Cardiac septum (tissue), 1 donor: ENCODE measurements at regions of chr6 and their contacts with region 1.

Region 1: DNA sequence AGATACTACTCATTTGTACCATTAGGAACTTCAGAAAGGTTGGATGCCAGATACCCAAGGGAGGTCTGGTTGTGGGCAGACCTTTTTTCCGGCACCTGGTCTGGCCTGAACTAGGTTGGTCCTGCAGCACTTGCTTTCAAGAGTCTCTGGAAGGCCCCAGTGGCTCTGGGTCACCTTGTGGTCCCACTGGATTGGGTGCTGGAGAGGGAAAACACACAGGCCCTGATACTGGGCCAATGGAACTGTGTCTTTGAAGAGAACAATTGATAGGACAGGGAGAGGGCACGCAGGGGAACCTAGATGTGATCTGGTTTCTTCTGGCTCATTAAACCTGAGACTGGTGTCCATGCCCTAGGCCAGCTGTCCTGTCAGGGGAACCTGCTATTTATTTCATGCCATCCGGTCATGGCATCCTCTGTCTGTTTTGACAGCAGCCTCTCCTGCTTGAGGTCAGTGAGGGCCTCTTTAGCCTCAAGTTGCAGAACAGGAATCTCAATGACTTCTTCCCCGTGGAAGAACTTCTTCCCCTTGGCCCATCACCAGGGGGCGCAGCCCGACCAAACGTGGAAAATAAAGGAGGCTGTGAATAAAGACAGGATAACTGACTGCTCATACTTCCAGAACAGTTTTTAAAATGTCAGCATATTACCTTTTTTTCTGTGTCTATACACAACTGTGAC is 25.0 kb downstream of the TAF8 start:
- DNase-seq: no peak

Region 2: DNA sequence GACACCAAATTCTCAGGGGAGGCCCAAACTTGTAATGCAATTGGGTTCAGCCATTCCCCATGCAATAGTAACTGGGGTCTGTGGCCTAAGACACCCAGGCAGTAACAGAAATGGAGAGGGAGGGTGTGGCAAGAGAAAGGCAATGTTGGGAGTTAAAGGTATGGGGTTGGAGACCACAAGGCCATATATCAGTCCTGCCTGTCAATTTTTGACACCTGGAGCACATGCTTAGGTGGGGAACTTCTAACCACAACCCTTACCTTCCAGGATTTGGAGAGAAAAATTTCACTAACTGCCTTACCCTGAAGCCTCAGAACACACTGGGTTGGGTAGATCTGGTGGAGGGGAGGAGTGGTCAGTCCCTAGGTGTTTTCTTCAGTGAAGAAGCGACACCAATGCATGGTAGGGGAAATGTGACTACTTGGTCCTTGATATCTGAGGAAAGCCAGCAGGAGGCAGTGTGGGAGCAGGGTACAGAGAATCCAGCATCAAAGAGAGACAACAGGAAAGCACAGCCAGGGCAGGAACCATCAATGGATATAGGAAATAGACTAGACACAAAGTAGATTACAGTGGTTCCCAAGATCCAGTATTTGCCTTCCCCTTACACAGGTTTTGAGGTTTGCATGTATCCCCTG is 173.3 kb before region 1 on chr6:
- intact Hi-C with region 1: no loop called
- DNase-seq: no peak

Region 3: DNA sequence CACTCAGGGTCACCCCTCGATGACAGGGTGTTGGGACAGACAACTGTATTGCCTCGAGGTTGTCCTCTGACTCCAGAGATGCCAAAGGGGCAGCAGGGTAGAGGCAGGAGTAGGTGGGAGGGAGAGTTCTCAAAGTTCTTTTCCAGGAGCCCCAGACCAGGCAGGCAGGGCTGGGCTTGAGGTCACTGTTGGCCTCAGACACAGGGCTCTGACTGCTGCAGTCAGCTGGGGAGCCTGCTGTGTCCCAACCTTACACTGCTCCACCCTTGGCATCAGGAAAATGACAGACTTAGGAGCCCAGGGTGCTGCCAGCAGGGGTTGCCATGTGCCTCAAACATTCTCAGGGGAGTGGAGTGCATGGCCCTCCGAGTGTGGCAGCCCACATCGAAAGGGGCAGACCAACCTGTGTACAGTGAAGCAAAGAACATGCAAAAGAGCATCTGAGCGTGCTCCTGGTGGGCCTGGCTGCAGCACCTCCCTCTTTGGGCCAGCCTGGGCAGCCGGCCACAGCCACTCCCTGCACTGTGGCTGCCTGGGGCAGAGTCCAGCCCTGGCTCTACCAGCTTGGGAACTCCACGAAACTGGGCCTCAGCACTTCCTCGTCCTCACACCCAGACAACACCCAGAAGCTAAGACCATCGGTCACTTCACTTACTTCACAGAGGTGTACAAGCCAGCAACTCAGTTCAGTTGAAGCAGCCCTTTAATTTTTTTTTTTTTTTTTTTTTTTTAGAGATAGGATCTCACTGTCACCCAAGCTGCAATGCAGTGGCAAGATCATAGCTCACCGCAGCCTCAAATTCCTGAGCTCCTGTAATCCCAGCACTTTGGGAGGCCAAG is 43.1 kb after region 1 on chr6:
- intact Hi-C with region 1: loop called (anchors 5 kb)
- DNase-seq: no peak

Region 4: GRCh38 chr6:42166444-42167141 is 91.3 kb after region 1 on chr6:
- intact Hi-C with region 1: loop called (anchors 1 kb)
- DNase-seq: no peak

Region 5: GRCh38 chr6:42210551-42210950 is 135.3 kb after region 1 on chr6:
- intact Hi-C with region 1: loop called (anchors 5 kb)
- DNase-seq: no peak

Region 6: DNA sequence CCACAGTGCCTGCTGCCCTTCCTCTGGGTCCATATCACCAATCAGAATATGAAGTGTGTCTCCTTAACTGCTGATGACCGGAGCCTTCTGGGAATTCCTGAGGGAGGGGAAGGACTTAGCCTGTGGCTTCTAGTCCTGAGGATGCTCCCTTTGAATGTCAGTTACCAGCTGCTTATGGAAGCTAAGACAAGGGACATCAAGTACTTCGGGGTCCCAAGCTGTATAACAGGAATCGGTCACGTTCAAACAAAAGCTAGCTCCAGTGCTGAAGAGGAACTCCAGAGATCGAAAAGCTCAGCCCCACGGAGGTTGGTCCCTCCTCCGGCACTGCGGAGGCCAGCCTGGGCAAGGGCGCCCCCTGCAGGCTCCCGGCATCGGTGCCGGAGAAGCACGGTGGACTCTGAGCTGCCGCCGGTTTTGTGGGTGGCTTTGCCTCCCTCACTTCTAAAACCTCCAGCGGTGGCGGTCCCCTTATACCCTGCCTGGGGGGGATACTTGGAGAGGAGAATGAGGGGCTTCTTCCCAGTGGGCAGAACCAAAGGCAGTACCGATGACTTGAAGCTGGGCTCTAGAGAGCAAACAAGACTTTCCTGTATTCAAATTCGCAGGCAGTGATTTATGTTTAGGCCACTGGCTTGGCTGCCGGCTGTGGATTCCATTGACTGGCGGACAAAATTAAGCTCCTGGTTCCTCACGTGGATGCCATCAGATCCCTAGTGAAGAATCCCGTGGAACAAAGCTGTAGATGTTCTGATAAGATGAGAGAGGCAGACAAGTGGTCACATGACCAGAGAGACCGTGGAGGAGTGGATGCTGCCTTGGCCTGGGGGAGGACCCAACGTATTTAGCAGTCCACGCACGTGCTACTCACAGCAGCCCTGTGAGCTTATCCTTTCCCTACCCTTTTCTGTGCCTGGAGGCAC is 472.4 kb after region 1 on chr6:
- intact Hi-C with region 1: loop called (anchors 5 kb)
- DNase-seq: peak; percentile 94